Activated CD8-positive, alpha-beta memory T cell treated with anti-CD3 and anti-CD28 coated beads, Interleukin-2, amount 10 ng/mL, durations not matched to agents 7 days and 5 days (primary cell): ENCODE measurements at regions of chr14 and their contacts with region 1.

Region 1: GRCh38 chr14:77067632-77068514 is 30.2 kb upstream of the CIPC start:
- DNase-seq: peak; percentile 68
- ATAC-seq: peak; percentile 68
- H3K4me3 Mint-ChIP-seq: no peak overlapping the region
- H3K27ac Mint-ChIP-seq: no peak overlapping the region
- H3K4me1 Mint-ChIP-seq: peaks cover 5% of the 10 kb centered on the region
- H3K27me3 Mint-ChIP-seq: peaks cover 18% of the 10 kb centered on the region

Region 2: DNA sequence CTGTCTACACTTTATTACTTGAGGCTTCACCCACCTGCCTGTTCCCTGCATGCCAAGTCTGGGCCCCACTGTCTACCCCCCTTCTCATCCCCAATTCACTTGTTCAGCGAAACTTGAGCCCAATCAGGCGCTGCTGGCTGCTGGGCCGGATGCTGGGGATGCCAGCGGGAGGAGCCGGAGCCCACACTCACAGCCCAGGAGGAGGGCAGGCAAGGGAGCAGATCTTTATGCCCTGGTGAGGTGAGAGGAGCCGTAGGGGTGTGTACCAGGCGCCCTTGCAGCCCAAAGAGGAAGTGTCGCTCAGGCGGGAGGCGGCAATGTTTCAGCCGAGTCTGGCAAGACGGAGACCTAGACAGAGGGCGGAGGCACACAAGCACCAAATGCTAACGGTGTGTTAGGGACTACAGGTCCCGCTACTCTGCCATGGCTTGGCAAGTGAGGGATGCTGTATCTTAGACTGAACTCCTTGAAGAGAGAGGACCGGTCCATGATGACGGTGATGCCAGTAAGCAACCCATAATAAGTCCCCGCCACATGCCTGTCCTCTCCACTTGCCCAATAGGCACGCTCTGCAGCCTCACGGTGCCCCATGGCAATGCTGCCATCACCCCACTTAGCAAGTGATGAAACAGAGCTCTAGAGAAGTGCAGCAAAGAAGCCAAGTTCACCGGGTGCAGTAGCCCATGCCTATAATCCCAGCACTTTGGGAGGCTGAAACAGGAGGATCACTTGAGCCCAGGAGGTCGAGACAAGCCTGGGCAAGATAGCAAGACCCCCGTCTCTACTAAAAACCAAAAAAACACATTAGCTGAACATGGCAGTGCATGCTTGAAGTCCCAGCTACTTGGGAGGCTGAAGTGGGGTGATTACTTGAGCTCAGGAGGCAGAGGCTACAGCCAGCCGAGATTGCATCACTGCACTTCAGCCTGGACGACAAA is 200.1 kb before region 1 on chr14:
- CTCF ChIA-PET with region 1: interaction called, 348 read pairs
- DNase-seq: no peak
- ATAC-seq: peak; percentile 52
- H3K4me3 Mint-ChIP-seq: no peak overlapping the region
- H3K27ac Mint-ChIP-seq: no peak overlapping the region
- H3K4me1 Mint-ChIP-seq: peaks cover 7% of the 10 kb centered on the region
- H3K27me3 Mint-ChIP-seq: peaks cover 25% of the 10 kb centered on the region

Region 3: DNA sequence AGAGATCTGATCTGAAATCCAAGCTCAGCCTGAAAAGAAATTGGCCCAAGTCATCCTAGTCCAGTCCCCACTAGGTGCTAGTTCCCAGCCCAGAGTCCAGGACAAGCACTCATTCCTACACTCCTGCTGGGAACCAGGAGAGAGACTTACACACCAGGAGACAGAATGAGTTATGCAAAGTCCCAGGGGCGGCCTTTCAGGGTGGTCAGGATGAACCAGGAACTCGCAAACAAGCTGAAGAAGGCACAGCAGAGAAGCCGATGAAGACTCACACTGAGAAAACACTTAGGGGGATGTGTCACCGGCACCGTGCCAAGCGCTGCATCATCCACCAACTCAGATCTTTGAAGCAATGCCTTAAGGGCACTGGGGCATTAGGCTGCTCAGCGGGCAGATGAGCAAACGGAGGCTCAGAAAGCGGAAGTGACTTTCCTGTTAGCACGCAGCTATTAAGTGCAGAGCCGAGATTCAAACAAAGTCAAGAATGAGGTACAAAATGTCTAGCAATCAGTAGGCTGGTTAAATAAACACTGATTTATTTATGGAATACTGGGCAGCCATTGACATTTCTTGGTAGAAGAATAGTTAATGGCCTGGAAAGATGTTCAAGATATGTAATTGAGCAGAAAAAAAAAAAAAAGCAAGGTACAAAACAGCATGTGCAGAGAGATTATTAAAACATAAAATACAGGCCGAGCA is 163.0 kb before region 1 on chr14:
- CTCF ChIA-PET with region 1: interaction called, 221 read pairs
- DNase-seq: peak; percentile 78
- ATAC-seq: peak; percentile 75
- H3K4me3 Mint-ChIP-seq: no peak overlapping the region
- H3K27ac Mint-ChIP-seq: no peak overlapping the region
- H3K4me1 Mint-ChIP-seq: peaks cover 29% of the 10 kb centered on the region
- H3K27me3 Mint-ChIP-seq: peaks cover 7% of the 10 kb centered on the region

Region 4: DNA sequence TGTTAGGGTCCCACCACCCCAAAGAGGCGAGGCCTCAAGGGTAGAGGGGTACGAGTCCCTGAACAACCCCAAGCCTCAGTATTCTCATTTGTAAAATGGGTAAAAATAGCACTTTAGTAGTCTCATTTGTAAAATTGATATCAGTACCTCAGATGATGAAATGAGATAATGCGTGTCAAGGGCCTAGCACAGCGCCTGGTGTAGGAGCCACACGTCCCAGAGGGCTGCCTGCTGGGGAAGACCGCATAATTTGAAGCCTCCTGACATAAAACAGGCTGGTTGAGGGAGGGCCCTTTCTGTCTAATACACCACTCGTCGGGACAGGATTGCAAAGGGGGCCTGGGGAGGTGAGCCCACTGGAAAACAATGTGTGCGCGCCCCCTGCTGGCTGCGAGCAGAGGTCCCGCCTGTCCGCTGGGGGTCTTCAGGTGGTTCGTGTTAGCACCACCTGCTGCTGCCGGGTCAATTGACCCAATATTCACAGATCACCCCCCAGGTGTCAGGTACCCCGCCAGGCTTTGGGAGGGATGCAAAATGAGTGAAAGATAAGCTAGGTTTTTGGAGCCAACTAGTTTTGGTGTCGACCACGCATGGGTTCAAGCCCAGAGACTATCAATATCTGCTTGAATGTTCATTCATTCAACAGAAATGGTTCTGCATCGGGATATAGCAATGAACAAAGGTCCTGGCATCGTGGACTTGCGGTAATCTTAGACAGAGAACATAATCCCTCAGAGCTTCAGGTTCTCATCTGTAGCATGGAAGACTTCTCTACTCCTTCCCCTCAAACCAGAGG is 14.6 kb before region 1 on chr14:
- CTCF ChIA-PET with region 1: interaction called, 27 read pairs
- DNase-seq: peak; percentile 78
- ATAC-seq: peak; percentile 92
- H3K4me3 Mint-ChIP-seq: no peak overlapping the region
- H3K27ac Mint-ChIP-seq: no peak overlapping the region
- H3K4me1 Mint-ChIP-seq: peaks cover 7% of the 10 kb centered on the region
- H3K27me3 Mint-ChIP-seq: no peaks in the 10 kb centered on the region

Region 5: GRCh38 chr14:77097700-77098528 is 30.0 kb after region 1 on chr14 and contains the start of gene CIPC:
- CTCF ChIA-PET with region 1: interaction called, 35 read pairs
- DNase-seq: peak; percentile 100
- ATAC-seq: peak; percentile 92
- H3K4me3 Mint-ChIP-seq: peak within 1 kb of the TSS; percentile 88
- H3K27ac Mint-ChIP-seq: peak within 1 kb of the TSS; percentile 92
- H3K4me1 Mint-ChIP-seq: peaks cover 37% of the 10 kb centered on the region
- H3K27me3 Mint-ChIP-seq: no peaks in the 10 kb centered on the region
- total RNA-seq, gene CIPC: 11.3 to 12.0 TPM